H1 (cell line): ENCODE measurements at regions of chr3 and their contacts with region 1.

Region 1: GRCh38 chr3:15953841-15954240 is 156.1 kb upstream of the ANKRD28 start:
- DNase-seq: no peak
- H3K4me3 ChIP-seq: no peak overlapping the region
- H3K27ac ChIP-seq: no peak overlapping the region
- H3K4me1 ChIP-seq: no peaks in the 10 kb centered on the region
- H3K27me3 ChIP-seq: no peaks in the 10 kb centered on the region
- CTCF ChIP-seq: no peak
- EP300 ChIP-seq: no peak
- POLR2A ChIP-seq: no peak
- RAD21 ChIP-seq: no peak

Region 2: DNA sequence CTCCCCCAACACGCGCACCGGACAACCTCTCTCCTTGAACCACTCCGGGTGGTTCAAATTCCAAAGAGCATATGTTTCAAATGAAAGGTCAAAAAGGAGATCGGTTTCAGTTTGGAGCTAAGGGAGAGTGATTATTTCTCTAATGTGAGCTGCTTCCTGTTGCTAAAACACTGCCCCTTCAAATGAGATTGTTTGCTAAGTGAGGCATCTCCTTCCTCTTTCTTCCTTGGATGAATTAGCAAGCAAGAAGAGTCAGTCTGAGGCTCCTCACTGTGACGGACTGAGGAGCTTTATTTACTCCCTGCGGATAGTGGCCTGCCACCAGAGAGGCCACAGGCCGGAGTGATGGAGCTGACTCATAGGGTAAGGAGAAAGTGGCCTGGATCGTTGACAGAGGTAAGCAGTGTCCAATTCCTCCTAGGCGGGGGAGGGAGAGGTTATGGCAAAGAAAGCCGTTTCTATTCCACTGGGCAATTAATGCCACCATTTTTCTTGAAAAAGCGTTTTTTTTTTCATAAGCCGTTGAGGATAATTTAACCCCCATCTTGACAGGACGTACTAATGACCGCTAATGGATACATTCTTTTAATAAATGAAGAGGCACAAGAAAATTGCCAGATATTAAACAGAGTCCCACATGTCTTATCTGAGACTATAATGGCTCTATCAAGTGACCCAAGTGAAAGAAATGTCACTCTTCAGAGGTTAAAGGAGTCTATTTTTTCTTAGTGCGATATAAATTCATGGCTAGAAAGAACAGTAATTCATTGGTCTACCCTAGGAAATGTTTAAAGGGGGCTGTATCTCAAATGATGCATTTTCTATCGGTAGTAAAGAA is 11.0 kb after region 1 on chr3:
- CTCF ChIA-PET with region 1: interaction called, 13 read pairs
- POLR2A ChIA-PET with region 1: no interaction called
- DNase-seq: no peak
- H3K4me3 ChIP-seq: no peak overlapping the region
- H3K27ac ChIP-seq: no peak overlapping the region
- H3K4me1 ChIP-seq: no peaks in the 10 kb centered on the region
- H3K27me3 ChIP-seq: no peaks in the 10 kb centered on the region
- CTCF ChIP-seq: no peak
- EP300 ChIP-seq: no peak
- POLR2A ChIP-seq: no peak
- RAD21 ChIP-seq: no peak

Region 3: GRCh38 chr3:15974647-15975046 is 20.8 kb after region 1 on chr3:
- CTCF ChIA-PET with region 1: interaction called, 34 read pairs
- POLR2A ChIA-PET with region 1: no interaction called
- DNase-seq: peak; percentile 31 to 85
- H3K4me3 ChIP-seq: no peak overlapping the region
- H3K27ac ChIP-seq: no peak overlapping the region
- H3K4me1 ChIP-seq: no peaks in the 10 kb centered on the region; a peak in 1 of 7 replicates
- H3K27me3 ChIP-seq: no peaks in the 10 kb centered on the region
- CTCF ChIP-seq: peak; percentile 66 to 83 (median 82)
- EP300 ChIP-seq: no peak
- POLR2A ChIP-seq: no peak
- RAD21 ChIP-seq: peak; percentile 52 to 70

Region 4: GRCh38 chr3:16012086-16012485 is 58.2 kb after region 1 on chr3:
- CTCF ChIA-PET with region 1: no interaction called
- POLR2A ChIA-PET with region 1: no interaction called
- DNase-seq: no peak
- H3K4me3 ChIP-seq: no peak overlapping the region
- H3K27ac ChIP-seq: no peak overlapping the region
- H3K4me1 ChIP-seq: no peaks in the 10 kb centered on the region; a peak in 1 of 7 replicates
- H3K27me3 ChIP-seq: no peaks in the 10 kb centered on the region
- CTCF ChIP-seq: no peak
- EP300 ChIP-seq: no peak
- POLR2A ChIP-seq: no peak
- RAD21 ChIP-seq: no peak